Endothelial cell of umbilical vein (primary cell): ENCODE measurements at regions of chr1 and their contacts with region 1.

Region 1: DNA sequence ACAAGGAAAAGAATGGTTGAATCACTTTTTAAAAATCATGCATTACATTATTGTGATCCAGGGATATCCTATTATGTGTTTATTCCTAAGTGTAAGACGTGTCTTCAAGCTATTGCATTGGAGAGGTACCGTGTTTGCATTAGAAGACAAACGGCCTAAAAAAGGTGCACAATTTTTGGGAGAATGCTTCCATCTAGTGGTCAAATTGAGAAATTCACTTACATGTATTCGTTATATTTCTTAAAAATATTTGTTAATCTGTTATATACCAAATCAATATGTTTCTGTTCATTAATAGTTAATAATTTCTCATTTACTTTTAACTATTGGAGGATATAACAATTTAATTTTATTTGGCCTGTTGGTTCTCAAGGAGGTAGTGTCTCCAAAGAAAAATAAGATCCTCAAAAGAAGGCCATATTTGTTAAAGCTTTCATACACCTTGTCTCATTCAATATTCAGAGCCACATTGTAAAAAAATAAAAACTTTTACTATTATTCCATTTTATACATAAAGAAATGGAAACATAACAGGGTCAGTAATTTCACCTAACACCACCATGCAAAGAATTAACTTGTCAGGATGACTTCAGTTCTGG is 40.5 kb upstream of the KCTD3 start:
- DNase-seq: peak; percentile 61
- H3K4me3 ChIP-seq: no peak overlapping the region
- H3K27ac ChIP-seq: no peak overlapping the region
- H3K4me1 ChIP-seq: no peaks in the 10 kb centered on the region
- H3K27me3 ChIP-seq: peaks cover 0 to 2% of the 10 kb centered on the region in 2 experiments
- CTCF ChIP-seq: peak; percentile 32 to 36
- POLR2A ChIP-seq: no peak

Region 2: GRCh38 chr1:214224611-214225354 is 1301.9 kb before region 1 on chr1:
- CTCF ChIA-PET with region 1: no interaction called
- POLR2A ChIA-PET with region 1: no interaction called
- dilution Hi-C with region 1: no loop called
- intact Hi-C with region 1: loop called (anchors 5 kb)
- DNase-seq: peak; percentile 31
- H3K4me3 ChIP-seq: peak overlapping the region; percentile 25 to 73 (median 48)
- H3K27ac ChIP-seq: no peak overlapping the region
- H3K4me1 ChIP-seq: peaks cover 7% of the 10 kb centered on the region
- H3K27me3 ChIP-seq: peaks cover 2 to 6% of the 10 kb centered on the region in 2 experiments
- CTCF ChIP-seq: no peak
- POLR2A ChIP-seq: no peak

Region 3: DNA sequence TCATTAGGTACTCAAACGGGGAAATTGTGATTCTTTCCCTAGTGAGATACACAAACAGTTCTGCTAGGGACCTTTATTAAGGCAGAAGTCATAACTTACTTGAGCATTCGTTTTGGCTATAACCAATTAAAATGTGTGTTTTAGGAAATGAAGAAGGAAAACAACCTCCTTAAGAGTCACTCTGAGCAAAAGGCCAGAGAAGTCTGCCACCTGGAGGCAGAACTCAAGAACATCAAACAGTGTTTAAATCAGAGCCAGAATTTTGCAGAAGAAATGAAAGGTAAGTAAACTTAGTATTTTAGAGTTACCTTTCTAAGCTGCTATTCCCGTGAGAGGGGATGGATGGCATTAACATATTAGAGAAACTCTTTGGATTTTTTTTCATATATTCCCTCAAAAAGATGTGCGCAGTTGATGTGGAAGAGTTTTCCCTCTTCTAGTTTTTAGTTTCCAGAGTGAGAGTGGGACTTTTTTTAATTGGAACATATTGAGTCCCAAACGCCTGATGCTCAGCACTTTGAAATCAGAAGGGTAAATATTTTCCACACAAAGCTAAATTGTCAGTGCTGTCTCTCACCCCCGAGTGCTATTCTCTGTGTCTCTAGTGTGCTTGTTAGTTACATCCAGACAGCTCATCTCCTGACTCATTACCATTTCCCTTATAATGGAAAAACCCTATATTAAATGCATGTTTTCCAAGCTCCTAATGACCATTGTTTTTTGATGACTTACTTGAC is 888.8 kb before region 1 on chr1:
- CTCF ChIA-PET with region 1: interaction called, 15 read pairs
- POLR2A ChIA-PET with region 1: no interaction called
- dilution Hi-C with region 1: no loop called
- intact Hi-C with region 1: loop called (anchors 2 kb)
- DNase-seq: peak; percentile 64
- H3K4me3 ChIP-seq: no peak overlapping the region
- H3K27ac ChIP-seq: no peak overlapping the region
- H3K4me1 ChIP-seq: peaks cover 7% of the 10 kb centered on the region
- H3K27me3 ChIP-seq: no peaks in the 10 kb centered on the region
- CTCF ChIP-seq: peak; percentile 52 to 68
- POLR2A ChIP-seq: no peak

Region 4: DNA sequence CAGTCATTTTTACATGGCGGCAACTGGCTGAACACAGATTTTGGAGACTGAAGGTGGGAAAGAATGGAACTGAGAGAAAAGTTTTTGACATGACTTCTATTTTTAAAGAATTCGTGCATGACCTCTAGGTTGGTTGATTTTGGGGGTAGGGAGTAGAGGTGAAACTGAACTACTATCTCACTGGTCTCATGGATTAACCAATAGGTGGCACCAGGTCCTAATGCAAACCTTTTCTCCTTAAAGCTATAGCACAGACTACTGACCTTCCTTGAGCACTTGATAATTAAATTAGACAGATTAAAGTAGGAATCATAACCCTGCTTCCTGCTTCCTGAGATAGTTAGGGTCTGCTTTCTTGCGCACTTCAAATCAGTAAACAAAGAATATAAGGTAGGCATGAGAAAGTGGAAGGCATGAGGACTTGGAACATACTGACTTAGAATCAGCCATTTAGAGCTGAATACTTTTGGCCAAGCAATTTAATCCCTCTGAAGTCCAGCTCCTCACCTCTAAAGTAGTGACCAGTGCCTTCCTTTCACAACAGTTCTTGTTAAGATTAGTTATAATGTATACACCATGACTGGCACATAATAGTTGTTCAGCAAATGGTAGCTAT is 717.7 kb before region 1 on chr1:
- CTCF ChIA-PET with region 1: interaction called, 47 read pairs
- POLR2A ChIA-PET with region 1: no interaction called
- dilution Hi-C with region 1: no loop called
- intact Hi-C with region 1: loop called (anchors 1 kb)
- DNase-seq: peak; percentile 25
- H3K4me3 ChIP-seq: no peak overlapping the region
- H3K27ac ChIP-seq: no peak overlapping the region
- H3K4me1 ChIP-seq: no peaks in the 10 kb centered on the region
- H3K27me3 ChIP-seq: no peaks in the 10 kb centered on the region
- CTCF ChIP-seq: peak; percentile 8 to 14
- POLR2A ChIP-seq: no peak

Region 5: DNA sequence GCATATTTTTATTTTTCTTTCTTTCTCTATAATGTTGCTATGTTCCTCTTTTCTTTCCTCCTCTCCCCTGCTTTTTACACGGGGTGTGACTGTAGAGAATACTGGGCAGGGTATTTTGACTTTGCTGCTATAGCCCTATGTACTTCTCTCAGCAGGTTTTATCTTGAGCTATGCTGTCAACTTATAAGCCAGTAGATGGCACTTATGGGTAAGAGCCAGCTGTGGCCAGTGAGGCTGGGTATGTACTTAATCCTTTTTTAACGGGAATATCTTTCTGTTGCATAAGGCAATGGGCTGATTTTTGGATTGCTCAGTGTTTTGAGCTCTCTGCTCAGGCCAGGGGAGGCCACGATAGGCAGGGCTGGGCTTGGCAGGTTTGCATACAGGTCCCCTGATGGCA is 345.1 kb before region 1 on chr1:
- CTCF ChIA-PET with region 1: interaction called, 103 read pairs
- POLR2A ChIA-PET with region 1: no interaction called
- dilution Hi-C with region 1: no loop called
- intact Hi-C with region 1: loop called (anchors 1 kb)
- DNase-seq: peak; percentile 14
- H3K4me3 ChIP-seq: no peak overlapping the region
- H3K27ac ChIP-seq: no peak overlapping the region
- H3K4me1 ChIP-seq: no peaks in the 10 kb centered on the region
- H3K27me3 ChIP-seq: peaks cover 0 to 3% of the 10 kb centered on the region in 2 experiments
- CTCF ChIP-seq: peak; percentile 10 to 27
- POLR2A ChIP-seq: no peak

Region 6: DNA sequence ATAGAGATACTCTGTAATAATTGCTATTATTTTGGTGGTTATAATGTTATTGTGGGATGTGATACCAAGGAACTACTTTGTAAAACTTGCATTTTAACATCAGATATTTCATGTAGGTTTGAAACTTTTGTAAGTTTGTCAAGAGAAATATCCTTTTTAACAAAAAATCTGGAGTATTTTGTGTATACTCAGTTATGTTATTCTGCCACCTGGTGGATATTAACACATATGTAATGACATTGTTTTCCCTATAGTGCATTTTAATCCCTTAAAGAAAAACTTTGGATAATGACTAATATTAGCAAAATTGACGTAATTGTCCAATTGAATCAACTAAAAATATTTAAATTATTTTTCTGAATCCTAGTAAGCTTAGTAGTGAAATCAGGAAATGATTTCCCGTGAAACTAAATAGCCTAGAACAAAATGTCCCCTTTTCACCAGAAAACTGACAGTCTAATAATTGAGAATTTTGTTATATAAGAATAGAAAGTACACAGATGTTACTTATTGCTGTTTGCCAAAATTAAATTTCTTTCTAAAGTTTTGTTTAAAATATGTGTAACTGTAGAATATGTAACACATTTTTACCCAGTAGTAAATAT is 80.0 kb after region 1 on chr1:
- CTCF ChIA-PET with region 1: interaction called, 4 read pairs
- POLR2A ChIA-PET with region 1: no interaction called
- dilution Hi-C with region 1: no loop called
- intact Hi-C with region 1: loop called (anchors 2 kb)
- DNase-seq: no peak
- H3K4me3 ChIP-seq: no peak overlapping the region
- H3K27ac ChIP-seq: no peak overlapping the region
- H3K4me1 ChIP-seq: no peaks in the 10 kb centered on the region
- H3K27me3 ChIP-seq: no peaks in the 10 kb centered on the region
- CTCF ChIP-seq: peak; percentile 15
- POLR2A ChIP-seq: no peak